Naive thymus-derived CD4-positive, alpha-beta T cell (primary cell): ENCODE measurements at regions of chr11 and their contacts with region 1.

Region 1: GRCh38 chr11:67353317-67354074 is at the start of gene POLD4:
- DNase-seq: peak; percentile 91 to 97 (median 95)
- ATAC-seq: peak; percentile 93
- H3K4me3 ChIP-seq: peak within 1 kb of the TSS; percentile 96
- H3K4me3 Mint-ChIP-seq: peak within 1 kb of the TSS; percentile 85 to 100 (median 97)
- H3K27ac ChIP-seq: peak within 1 kb of the TSS; percentile 97
- H3K27ac Mint-ChIP-seq: peak within 1 kb of the TSS; percentile 97 to 100 (median 99)
- H3K4me1 ChIP-seq: peaks cover 30 to 45% of the 10 kb centered on the region in 2 donors
- H3K4me1 Mint-ChIP-seq: peaks cover 31 to 64% (median 50%) of the 10 kb centered on the region in 7 donors
- H3K27me3 ChIP-seq: no peaks in the 10 kb centered on the region
- H3K27me3 Mint-ChIP-seq: peaks cover 0 to 5% (median 0%) of the 10 kb centered on the region in 5 donors
- total RNA-seq, gene POLD4: 59.9 to 104 (median 76.1) TPM

Region 2: DNA sequence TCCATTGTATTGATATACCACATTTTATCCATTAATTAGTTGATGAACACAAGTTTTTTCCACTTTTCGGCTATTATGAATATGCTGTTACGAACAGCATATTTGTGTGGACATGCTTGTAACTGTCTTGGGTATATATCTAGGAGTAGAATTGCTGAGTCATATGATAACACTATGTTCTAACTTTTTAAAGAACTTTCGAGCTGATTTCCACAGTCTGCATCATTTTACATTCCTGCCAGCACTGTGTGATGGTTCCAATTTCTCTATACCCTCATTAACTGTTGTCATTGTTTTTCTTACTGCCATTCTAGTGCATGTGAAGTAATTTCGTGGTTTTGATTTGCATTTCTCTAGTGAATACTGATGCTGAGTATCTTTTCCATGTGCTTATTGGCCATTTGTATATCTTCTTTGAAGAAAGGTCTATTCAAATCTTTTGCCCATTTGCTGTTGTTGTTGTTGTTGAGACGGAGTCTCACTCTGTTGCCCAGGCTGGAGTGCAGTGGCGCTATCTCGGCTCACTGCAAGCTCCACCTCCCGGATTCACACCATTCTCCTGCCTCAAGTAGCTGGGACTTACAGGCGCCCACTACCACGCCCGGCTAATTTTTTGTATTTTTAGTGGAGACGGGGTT is 517.6 kb before region 1 on chr11:
- CTCF ChIA-PET with region 1: no interaction called
- POLR2A ChIA-PET with region 1: no interaction called
- intact Hi-C with region 1: no loop called
- DNase-seq: no peak
- ATAC-seq: no peak
- H3K4me3 ChIP-seq: no peak overlapping the region
- H3K4me3 Mint-ChIP-seq: no peak overlapping the region
- H3K27ac ChIP-seq: no peak overlapping the region
- H3K27ac Mint-ChIP-seq: peak overlapping the region in 1 of 9 donors; percentile 53
- H3K4me1 ChIP-seq: peaks cover 8 to 17% of the 10 kb centered on the region in 2 donors
- H3K4me1 Mint-ChIP-seq: peaks cover 9 to 37% (median 32%) of the 10 kb centered on the region in 7 donors
- H3K27me3 ChIP-seq: no peaks in the 10 kb centered on the region
- H3K27me3 Mint-ChIP-seq: no peaks in the 10 kb centered on the region

Region 3: DNA sequence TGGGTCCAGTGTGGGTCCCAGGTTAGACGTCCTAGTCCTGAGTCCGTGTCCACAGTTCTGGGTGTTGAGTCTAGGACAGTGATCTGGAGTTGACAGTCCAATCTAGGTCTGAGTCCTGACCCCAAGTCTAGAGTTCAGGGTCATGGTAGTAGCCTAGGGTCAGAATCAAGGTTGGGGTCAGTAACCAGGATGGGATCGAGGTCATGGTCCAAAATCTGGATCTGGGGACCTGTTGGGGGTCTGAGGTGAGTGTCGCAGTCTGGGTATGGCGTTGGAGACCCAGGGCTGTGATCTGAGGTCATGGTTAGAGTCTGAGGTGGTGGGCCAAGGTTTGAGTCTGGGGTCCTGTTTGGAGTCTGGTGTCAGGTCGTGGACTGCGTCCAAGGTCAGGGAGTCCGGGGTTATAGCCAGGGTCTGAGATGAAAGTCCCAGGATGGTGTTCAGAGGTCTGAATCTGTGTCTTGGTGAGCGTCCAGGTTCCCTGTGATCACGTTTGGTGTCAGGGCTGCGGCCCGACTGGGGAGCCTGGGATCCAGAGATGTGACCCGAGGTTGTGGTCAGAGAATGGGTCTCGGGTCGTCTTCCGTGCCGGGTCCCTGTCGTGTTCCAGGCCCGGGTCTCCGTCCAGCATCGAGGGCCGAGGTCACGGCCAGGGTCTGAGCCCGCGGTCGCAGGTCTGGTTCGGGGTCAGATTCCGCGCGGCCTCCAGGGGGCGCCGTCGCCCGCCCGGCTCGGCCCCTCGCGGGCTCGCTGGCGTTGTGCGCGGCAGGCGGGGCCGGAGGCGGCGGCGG is 87.7 kb before region 1 on chr11:
- CTCF ChIA-PET with region 1: interaction called, 6 read pairs
- POLR2A ChIA-PET with region 1: interaction called, 25 read pairs
- intact Hi-C with region 1: loop called in 1 of 2 experiments (anchors 1 kb)
- DNase-seq: peak; percentile 50 to 91 (median 78)
- ATAC-seq: peak; percentile 76
- H3K4me3 ChIP-seq: peak overlapping the region; percentile 25
- H3K4me3 Mint-ChIP-seq: peak overlapping the region; percentile 75 to 99 (median 84)
- H3K27ac ChIP-seq: peak overlapping the region; percentile 65
- H3K27ac Mint-ChIP-seq: peak overlapping the region; percentile 72 to 94 (median 81)
- H3K4me1 ChIP-seq: peaks cover 42 to 56% of the 10 kb centered on the region in 2 donors
- H3K4me1 Mint-ChIP-seq: peaks cover 22 to 77% (median 65%) of the 10 kb centered on the region in 7 donors
- H3K27me3 ChIP-seq: no peaks in the 10 kb centered on the region
- H3K27me3 Mint-ChIP-seq: no peaks in the 10 kb centered on the region

Region 4: GRCh38 chr11:67373925-67374618 is 20.6 kb after region 1 on chr11:
- CTCF ChIA-PET with region 1: interaction called, 495 read pairs
- POLR2A ChIA-PET with region 1: interaction called, 272 read pairs
- intact Hi-C with region 1: loop called (anchors 1 kb)
- DNase-seq: peak in 6 of 9 donors; percentile 45 to 56 (median 50)
- ATAC-seq: peak; percentile 68
- H3K4me3 ChIP-seq: peak overlapping the region; percentile 64
- H3K4me3 Mint-ChIP-seq: peak overlapping the region; percentile 74 to 98 (median 86)
- H3K27ac ChIP-seq: peak overlapping the region; percentile 57
- H3K27ac Mint-ChIP-seq: peak overlapping the region in 7 of 9 donors; percentile 55 to 83 (median 69)
- H3K4me1 ChIP-seq: peaks cover 12 to 31% of the 10 kb centered on the region in 2 donors
- H3K4me1 Mint-ChIP-seq: peaks cover 18 to 41% (median 27%) of the 10 kb centered on the region in 7 donors
- H3K27me3 ChIP-seq: peaks cover 0 to 5% of the 10 kb centered on the region in 2 donors
- H3K27me3 Mint-ChIP-seq: peaks cover 0 to 60% (median 14%) of the 10 kb centered on the region in 5 donors

Region 5: GRCh38 chr11:67409261-67409666 is 55.8 kb after region 1 on chr11:
- CTCF ChIA-PET with region 1: interaction called, 3 read pairs
- POLR2A ChIA-PET with region 1: interaction called, 12 read pairs
- intact Hi-C with region 1: no loop called
- DNase-seq: peak in 8 of 9 donors; percentile 62 to 82 (median 78)
- ATAC-seq: peak; percentile 78
- H3K4me3 ChIP-seq: peak overlapping the region; percentile 98
- H3K4me3 Mint-ChIP-seq: peak overlapping the region; percentile 80 to 100 (median 96)
- H3K27ac ChIP-seq: peak overlapping the region; percentile 87
- H3K27ac Mint-ChIP-seq: peak overlapping the region; percentile 83 to 98 (median 93)
- H3K4me1 ChIP-seq: peaks cover 86% of the 10 kb centered on the region in 2 donors
- H3K4me1 Mint-ChIP-seq: peaks cover 52 to 90% (median 78%) of the 10 kb centered on the region in 7 donors
- H3K27me3 ChIP-seq: no peaks in the 10 kb centered on the region
- H3K27me3 Mint-ChIP-seq: peaks cover 0 to 8% (median 0%) of the 10 kb centered on the region in 5 donors

Region 6: DNA sequence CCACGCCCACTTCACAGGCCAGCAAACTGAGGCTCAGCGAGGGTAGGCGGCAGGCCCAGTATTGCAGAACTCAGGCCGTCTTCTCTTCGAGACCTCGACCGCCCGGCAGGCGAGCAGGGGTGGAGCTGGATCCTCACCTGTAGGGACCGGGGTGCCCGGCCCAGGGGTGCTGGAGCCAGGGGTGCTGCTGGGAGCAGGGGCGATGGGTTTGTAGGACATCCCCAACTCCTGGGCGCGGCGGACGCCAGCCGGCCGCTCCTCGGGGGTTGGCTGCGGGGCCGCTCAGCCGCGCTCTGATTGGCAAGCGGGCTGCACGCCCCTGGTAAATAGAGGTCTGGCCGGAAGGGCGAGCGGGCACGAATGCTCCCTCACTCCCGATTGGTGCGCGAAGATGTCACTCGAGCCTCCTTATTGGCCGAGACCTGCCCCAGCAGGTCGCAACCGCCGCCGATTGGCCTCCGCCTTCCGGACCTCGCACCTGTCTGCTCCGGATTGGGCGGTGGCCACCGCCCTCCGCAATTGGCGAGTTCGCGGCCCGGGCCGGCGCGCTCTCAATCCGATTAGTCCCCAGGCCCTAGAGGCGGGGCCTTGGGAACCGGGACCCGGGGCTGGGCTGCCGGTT is 154.5 kb after region 1 on chr11 and contains the start of gene CDK2AP2:
- CTCF ChIA-PET with region 1: interaction called, 3 read pairs
- POLR2A ChIA-PET with region 1: interaction called, 11 read pairs
- intact Hi-C with region 1: loop called (anchors 1 kb)
- DNase-seq: peak in 8 of 9 donors; percentile 89 to 97 (median 96)
- ATAC-seq: peak; percentile 81
- H3K4me3 ChIP-seq: peak within 1 kb of the TSS; percentile 91
- H3K4me3 Mint-ChIP-seq: peak within 1 kb of the TSS; percentile 89 to 95 (median 90)
- H3K27ac ChIP-seq: peak within 1 kb of the TSS; percentile 96
- H3K27ac Mint-ChIP-seq: peak within 1 kb of the TSS; percentile 87 to 98 (median 96)
- H3K4me1 ChIP-seq: peaks cover 40 to 43% of the 10 kb centered on the region in 2 donors
- H3K4me1 Mint-ChIP-seq: peaks cover 26 to 45% (median 36%) of the 10 kb centered on the region in 7 donors
- H3K27me3 ChIP-seq: no peaks in the 10 kb centered on the region
- H3K27me3 Mint-ChIP-seq: peaks cover 0 to 18% (median 0%) of the 10 kb centered on the region in 5 donors
- total RNA-seq, gene CDK2AP2: 31.0 to 168 (median 61.9) TPM

Region 7: GRCh38 chr11:68164437-68164836 is 810.9 kb after region 1 on chr11:
- CTCF ChIA-PET with region 1: no interaction called
- POLR2A ChIA-PET with region 1: no interaction called
- intact Hi-C with region 1: no loop called
- DNase-seq: no peak
- ATAC-seq: no peak
- H3K4me3 ChIP-seq: no peak overlapping the region
- H3K4me3 Mint-ChIP-seq: no peak overlapping the region
- H3K27ac ChIP-seq: no peak overlapping the region
- H3K27ac Mint-ChIP-seq: peak overlapping the region in 3 of 9 donors; percentile 3 to 65 (median 38)
- H3K4me1 ChIP-seq: no peaks in the 10 kb centered on the region
- H3K4me1 Mint-ChIP-seq: peaks cover 0 to 2% (median 0%) of the 10 kb centered on the region in 7 donors
- H3K27me3 ChIP-seq: no peaks in the 10 kb centered on the region
- H3K27me3 Mint-ChIP-seq: no peaks in the 10 kb centered on the region